Right ventricle myocardium superior (tissue), 1 donor: ENCODE measurements at regions of chr13 and their contacts with region 1.

Region 1: GRCh38 chr13:51148952-51149573 is 38.0 kb upstream of the C13orf42 start:
- DNase-seq: no peak
- ATAC-seq: peak; percentile 75

Region 2: GRCh38 chr13:51222037-51222685 is 73.1 kb after region 1 on chr13 and contains the start of gene FAM124A:
- intact Hi-C with region 1: loop called (anchors 5 kb)
- DNase-seq: peak; percentile 70
- ATAC-seq: peak; percentile 92
- total RNA-seq, gene FAM124A: 12.2 TPM